PC-9 (cell line): ENCODE measurements at regions of chr11 and their contacts with region 1.

Region 1: GRCh38 chr11:100776212-100776896 is 89.3 kb downstream of the ARHGAP42 start:
- DNase-seq: peak; percentile 40 to 100
- H3K4me3 ChIP-seq: peak overlapping the region; percentile 0; the same call in 1 of the 2 replicates
- H3K27ac ChIP-seq: peak overlapping the region; percentile 98
- H3K4me1 ChIP-seq: peaks cover 44% of the 10 kb centered on the region
- H3K27me3 ChIP-seq: no peaks in the 10 kb centered on the region
- CTCF ChIP-seq: no peak

Region 2: GRCh38 chr11:100687630-100688395 is 88.5 kb before region 1 on chr11:
- CTCF ChIA-PET with region 1: interaction called, 4 read pairs
- POLR2A ChIA-PET with region 1: interaction called, 14 read pairs
- intact Hi-C with region 1: loop called (anchors 1 kb)
- DNase-seq: peak; percentile 62 to 83
- H3K4me3 ChIP-seq: peak overlapping the region; percentile 88
- H3K27ac ChIP-seq: peak overlapping the region; percentile 57
- H3K4me1 ChIP-seq: peaks cover 63% of the 10 kb centered on the region
- H3K27me3 ChIP-seq: no peaks in the 10 kb centered on the region
- CTCF ChIP-seq: peak; percentile 80

Region 3: GRCh38 chr11:100719809-100720221 is 56.5 kb before region 1 on chr11:
- CTCF ChIA-PET with region 1: interaction called, 3 read pairs
- POLR2A ChIA-PET with region 1: interaction called, 16 read pairs
- intact Hi-C with region 1: loop called (anchors 1 kb)
- DNase-seq: peak; percentile 76 to 91
- H3K4me3 ChIP-seq: peak overlapping the region; percentile 9; the same call in 1 of the 2 replicates
- H3K27ac ChIP-seq: peak overlapping the region; percentile 80
- H3K4me1 ChIP-seq: peaks cover 30% of the 10 kb centered on the region
- H3K27me3 ChIP-seq: no peaks in the 10 kb centered on the region
- CTCF ChIP-seq: no peak

Region 4: GRCh38 chr11:100753172-100753543 is 23.2 kb before region 1 on chr11:
- CTCF ChIA-PET with region 1: interaction called, 3 read pairs
- POLR2A ChIA-PET with region 1: interaction called, 5 read pairs
- intact Hi-C with region 1: loop called (anchors 2 kb)
- DNase-seq: peak; percentile 84 to 98
- H3K4me3 ChIP-seq: no peak overlapping the region; the same call in 1 of the 2 replicates
- H3K27ac ChIP-seq: peak overlapping the region; percentile 76
- H3K4me1 ChIP-seq: peaks cover 33% of the 10 kb centered on the region
- H3K27me3 ChIP-seq: no peaks in the 10 kb centered on the region
- CTCF ChIP-seq: peak; percentile 13; the same call in 1 of the 2 replicates

Region 5: GRCh38 chr11:100827934-100828661 is 51.7 kb after region 1 on chr11:
- CTCF ChIA-PET with region 1: interaction called, 10 read pairs
- POLR2A ChIA-PET with region 1: interaction called, 24 read pairs
- intact Hi-C with region 1: loop called (anchors 1 kb)
- DNase-seq: peak; percentile 46 to 95
- H3K4me3 ChIP-seq: no peak overlapping the region
- H3K27ac ChIP-seq: peak overlapping the region; percentile 75
- H3K4me1 ChIP-seq: peaks cover 50% of the 10 kb centered on the region
- H3K27me3 ChIP-seq: no peaks in the 10 kb centered on the region
- CTCF ChIP-seq: peak; percentile 67

Region 6: DNA sequence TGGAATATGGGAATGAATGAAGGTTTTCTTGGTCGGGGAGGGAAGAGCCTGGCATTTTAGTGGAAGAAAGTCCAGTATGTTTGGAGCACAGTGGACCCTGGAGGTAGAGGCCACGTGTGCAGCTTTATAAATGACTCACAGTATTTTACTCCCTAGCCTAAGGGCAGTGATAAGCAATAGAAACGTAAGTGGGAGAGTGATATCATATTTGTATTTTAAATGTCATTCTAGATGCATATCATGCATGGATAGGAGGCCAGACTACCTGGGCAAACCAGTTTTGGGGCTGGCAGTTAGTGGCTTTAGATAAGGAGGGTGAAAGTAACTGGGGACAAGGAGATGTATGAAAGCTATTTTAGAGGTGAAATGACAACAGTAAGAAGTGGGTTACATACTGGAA is 84.9 kb after region 1 on chr11:
- CTCF ChIA-PET with region 1: no interaction called
- POLR2A ChIA-PET with region 1: interaction called, 4 read pairs
- intact Hi-C with region 1: loop called (anchors 1 kb)
- DNase-seq: peak; percentile 68 to 97
- H3K4me3 ChIP-seq: no peak overlapping the region
- H3K27ac ChIP-seq: peak overlapping the region; percentile 62
- H3K4me1 ChIP-seq: peaks cover 34% of the 10 kb centered on the region
- H3K27me3 ChIP-seq: no peaks in the 10 kb centered on the region
- CTCF ChIP-seq: no peak

Region 7: GRCh38 chr11:101010899-101011298 is 234.5 kb after region 1 on chr11:
- CTCF ChIA-PET with region 1: no interaction called
- POLR2A ChIA-PET with region 1: no interaction called
- intact Hi-C with region 1: no loop called
- DNase-seq: no peak
- H3K4me3 ChIP-seq: no peak overlapping the region
- H3K27ac ChIP-seq: no peak overlapping the region
- H3K4me1 ChIP-seq: no peaks in the 10 kb centered on the region
- H3K27me3 ChIP-seq: no peaks in the 10 kb centered on the region
- CTCF ChIP-seq: no peak